Common myeloid progenitor, CD34-positive (primary cell): ENCODE measurements at regions of chr19 and their contacts with region 1.

Region 1: GRCh38 chr19:47081111-47081510 is 32.5 kb downstream of the ZC3H4 start:
- DNase-seq: no peak
- H3K4me3 ChIP-seq: no peak overlapping the region
- H3K27ac ChIP-seq: no peak overlapping the region
- H3K4me1 ChIP-seq: peaks cover 0 to 1% (median under 1%) of the 10 kb centered on the region in 4 experiments
- H3K27me3 ChIP-seq: no peaks in the 10 kb centered on the region

Region 2: GRCh38 chr19:47097396-47098201 is 16.5 kb after region 1 on chr19:
- CTCF ChIA-PET with region 1: interaction called, 16 read pairs
- POLR2A ChIA-PET with region 1: no interaction called
- DNase-seq: no peak
- H3K4me3 ChIP-seq: no peak overlapping the region
- H3K27ac ChIP-seq: peak overlapping the region in 1 of 2 experiments; percentile 37
- H3K4me1 ChIP-seq: peaks cover 0 to 42% (median 27%) of the 10 kb centered on the region in 4 experiments
- H3K27me3 ChIP-seq: no peaks in the 10 kb centered on the region

Region 3: DNA sequence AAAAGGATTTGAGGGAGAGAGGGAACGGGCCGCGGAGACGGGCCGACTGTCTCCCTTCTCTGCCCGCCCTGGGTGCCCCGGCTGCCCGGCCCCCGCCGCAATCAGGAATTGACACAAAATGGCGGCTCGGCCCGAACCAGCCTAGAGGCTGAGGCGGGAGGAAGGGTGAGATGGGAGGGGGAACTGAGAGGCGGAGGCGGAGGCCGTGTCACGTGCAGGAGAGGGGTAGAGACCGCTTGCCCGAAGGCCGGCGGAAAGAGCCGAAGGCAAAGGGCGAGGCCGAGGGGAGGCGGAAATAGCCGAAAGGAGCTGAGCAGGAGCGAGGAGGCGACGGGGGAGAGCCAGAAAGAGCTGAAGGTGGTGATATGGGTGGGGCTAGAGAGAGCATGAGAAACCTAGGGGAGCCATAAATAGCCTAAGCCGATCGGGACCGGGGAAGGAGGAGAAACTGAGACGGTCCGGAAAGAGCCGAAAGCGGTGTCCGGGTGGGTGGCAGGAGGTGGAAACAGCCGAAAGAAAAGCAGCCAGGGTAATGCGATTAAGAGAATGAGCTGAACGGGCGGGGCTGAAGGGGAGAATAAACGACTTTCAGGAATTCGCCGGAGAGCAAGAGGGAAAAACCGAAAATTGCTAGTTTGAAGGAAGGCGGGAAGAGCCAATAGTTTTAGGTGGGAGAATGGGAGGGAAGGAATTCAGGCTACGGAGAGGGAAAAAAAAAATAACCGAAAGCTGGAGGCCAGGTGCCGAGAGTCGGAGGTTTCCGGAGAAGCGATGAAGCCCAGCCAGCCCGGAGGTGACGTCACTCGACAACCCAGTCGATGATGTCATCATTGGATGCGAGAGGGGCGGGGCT is 32.1 kb after region 1 on chr19 and contains the start of gene ZC3H4:
- CTCF ChIA-PET with region 1: interaction called, 116 read pairs
- POLR2A ChIA-PET with region 1: interaction called, 4 read pairs
- DNase-seq: peak; percentile 99 to 100 (median 99)
- H3K4me3 ChIP-seq: peak within 1 kb of the TSS; percentile 80 to 99 (median 90)
- H3K27ac ChIP-seq: peak within 1 kb of the TSS; percentile 99 to 100
- H3K4me1 ChIP-seq: peaks cover 20 to 38% (median 31%) of the 10 kb centered on the region in 4 experiments
- H3K27me3 ChIP-seq: no peaks in the 10 kb centered on the region

Region 4: DNA sequence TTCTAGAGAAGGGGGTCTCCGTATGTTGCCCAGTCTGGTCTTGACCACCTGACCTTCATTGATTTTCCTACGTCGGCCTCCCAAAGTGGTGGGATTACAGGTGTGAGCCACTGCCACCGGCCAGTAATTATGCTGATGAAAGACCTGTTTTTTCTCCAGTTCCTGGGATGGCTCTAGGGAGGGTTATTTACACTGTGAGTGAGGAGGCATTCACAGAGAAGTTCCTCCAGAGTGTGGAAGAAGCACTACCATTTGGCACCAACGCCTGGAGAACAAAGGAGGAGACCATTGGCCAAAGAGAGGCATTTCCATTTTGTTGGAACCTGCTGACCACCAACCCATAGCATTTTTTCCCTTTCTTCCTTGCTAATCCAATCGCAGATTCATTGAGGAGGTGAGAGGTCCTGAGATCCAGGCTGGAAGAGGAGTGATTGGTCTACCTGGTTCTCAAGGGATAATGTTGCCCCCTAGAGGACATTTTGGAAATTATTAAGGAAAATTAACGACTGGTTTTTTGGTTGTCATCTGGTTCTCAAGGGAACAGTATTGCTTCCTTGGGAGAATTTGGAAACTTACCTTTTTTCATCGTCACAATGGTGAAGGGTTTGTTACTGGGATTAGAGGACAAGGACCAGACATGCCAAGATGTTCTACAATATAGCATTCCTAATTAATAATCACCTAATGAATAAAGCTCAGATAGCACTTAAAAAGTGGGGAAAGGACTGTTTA is 44.0 kb after region 1 on chr19:
- CTCF ChIA-PET with region 1: interaction called, 116 read pairs
- POLR2A ChIA-PET with region 1: no interaction called
- DNase-seq: peak; percentile 67 to 76 (median 67)
- H3K4me3 ChIP-seq: no peak overlapping the region
- H3K27ac ChIP-seq: no peak overlapping the region
- H3K4me1 ChIP-seq: peaks cover 0 to 3% (median 0%) of the 10 kb centered on the region in 4 experiments
- H3K27me3 ChIP-seq: no peaks in the 10 kb centered on the region